HCT116 (cell line): ENCODE measurements at regions of chr16 and their contacts with region 1.

Region 1: DNA sequence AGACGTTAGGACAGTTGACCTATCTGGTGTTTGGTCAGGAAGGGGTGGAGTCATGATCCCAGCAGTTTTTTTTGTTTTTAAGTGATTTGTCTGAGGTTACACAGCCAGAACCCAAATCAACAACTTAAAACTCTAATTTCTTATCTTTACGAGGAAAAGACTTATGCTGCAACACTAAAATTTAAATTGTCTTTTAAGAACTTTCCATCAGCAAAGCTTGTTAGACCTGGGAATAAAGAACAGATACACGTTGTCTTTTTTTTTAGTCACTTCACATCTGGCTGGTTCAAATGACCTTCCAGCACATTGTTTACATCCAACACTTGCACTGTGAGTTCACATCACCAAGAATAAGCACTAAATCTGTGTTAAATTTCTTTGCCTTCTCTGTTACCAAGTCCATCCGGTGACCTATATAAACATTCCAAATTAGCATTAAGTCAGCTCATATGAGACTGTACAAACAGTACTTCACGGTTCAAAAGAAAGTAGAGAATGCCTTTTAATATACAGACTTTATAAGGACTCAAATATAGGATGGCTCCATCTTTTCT is 115.0 kb downstream of the HS3ST2 start:
- DNase-seq: no peak
- ATAC-seq: no peak
- H3K4me3 ChIP-seq: no peak overlapping the region
- H3K27ac ChIP-seq: no peak overlapping the region
- H3K4me1 ChIP-seq: no peaks in the 10 kb centered on the region
- H3K27me3 ChIP-seq: peaks cover 78% of the 10 kb centered on the region
- CTCF ChIP-seq: no peak
- POLR2A ChIP-seq: no peak
- RAD21 ChIP-seq: no peak

Region 2: DNA sequence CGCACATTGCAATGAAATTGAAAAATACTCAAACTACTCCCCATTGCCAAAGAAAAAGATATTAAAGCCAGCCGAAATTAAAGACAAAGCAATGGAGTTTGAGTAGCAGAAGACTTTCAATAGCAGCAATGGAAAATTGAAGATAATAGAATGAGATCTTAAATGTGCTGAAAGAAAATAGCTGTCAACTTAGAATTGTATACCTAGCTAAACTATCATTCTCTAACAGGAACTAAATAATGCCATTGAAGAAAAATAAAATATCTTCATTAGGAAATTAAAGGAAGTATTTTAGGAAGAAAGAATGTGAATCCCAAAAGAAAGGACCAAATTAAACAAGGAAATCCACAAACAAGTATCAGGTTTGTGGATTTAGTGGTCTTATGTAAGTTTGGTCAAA is 54.7 kb after region 1 on chr16:
- CTCF ChIA-PET with region 1: no interaction called
- POLR2A ChIA-PET with region 1: no interaction called
- RAD21 ChIA-PET with region 1: no interaction called
- intact Hi-C with region 1: loop called (anchors 2 kb)
- DNase-seq: no peak
- ATAC-seq: no peak
- H3K4me3 ChIP-seq: no peak overlapping the region
- H3K27ac ChIP-seq: no peak overlapping the region
- H3K4me1 ChIP-seq: no peaks in the 10 kb centered on the region
- H3K27me3 ChIP-seq: peaks cover 3% of the 10 kb centered on the region; the same call in 1 of the 2 replicates
- CTCF ChIP-seq: no peak
- POLR2A ChIP-seq: no peak
- RAD21 ChIP-seq: no peak